Common myeloid progenitor, CD34-positive (primary cell): ENCODE measurements at regions of chr2 and their contacts with region 1.

Region 1: GRCh38 chr2:172285010-172285621 is 142.3 kb upstream of the ITGA6 start:
- DNase-seq: peak in 1 of 3 donors; percentile 14
- H3K4me3 ChIP-seq: no peak overlapping the region
- H3K27ac ChIP-seq: no peak overlapping the region
- H3K4me1 ChIP-seq: peaks cover 17 to 64% (median 60%) of the 10 kb centered on the region in 4 experiments
- H3K27me3 ChIP-seq: no peaks in the 10 kb centered on the region

Region 2: DNA sequence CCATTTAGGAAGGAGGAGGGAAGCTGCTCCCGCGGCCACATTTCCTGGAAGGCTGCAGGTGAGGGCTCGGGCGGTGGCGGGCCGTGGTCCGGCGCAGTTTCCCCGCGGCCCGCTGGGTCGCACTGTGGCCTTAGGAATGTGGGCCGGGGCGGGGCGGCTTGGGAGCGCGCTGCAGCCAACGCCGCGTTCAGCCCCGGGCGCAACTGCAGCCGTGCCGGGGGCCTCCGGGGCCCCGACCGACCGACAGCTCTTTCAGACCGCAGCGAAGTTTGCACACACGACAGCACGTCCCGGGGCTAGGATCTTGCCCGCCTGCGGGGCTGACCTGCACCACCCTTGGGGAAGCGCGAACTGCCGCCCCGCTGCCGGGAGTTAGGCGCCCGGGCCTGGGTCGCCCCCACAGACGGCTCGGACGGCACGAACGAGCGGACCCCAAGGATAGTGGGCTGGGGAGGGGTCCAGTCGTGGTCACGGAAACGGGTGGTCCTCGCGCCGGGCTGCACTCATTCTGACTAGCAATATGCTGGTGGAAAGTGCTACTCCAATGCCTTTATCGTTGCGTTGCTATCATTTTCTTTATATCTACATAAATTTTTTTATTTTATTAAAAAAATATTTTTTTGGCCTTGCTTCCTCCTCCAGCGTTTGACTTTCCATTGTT is 112.5 kb before region 1 on chr2:
- CTCF ChIA-PET with region 1: interaction called, 11 read pairs
- POLR2A ChIA-PET with region 1: no interaction called
- DNase-seq: peak; percentile 69 to 82 (median 76)
- H3K4me3 ChIP-seq: peak overlapping the region; percentile 53 to 86 (median 74)
- H3K27ac ChIP-seq: no peak overlapping the region
- H3K4me1 ChIP-seq: peaks cover 0 to 23% (median 9%) of the 10 kb centered on the region in 4 experiments
- H3K27me3 ChIP-seq: no peaks in the 10 kb centered on the region

Region 3: DNA sequence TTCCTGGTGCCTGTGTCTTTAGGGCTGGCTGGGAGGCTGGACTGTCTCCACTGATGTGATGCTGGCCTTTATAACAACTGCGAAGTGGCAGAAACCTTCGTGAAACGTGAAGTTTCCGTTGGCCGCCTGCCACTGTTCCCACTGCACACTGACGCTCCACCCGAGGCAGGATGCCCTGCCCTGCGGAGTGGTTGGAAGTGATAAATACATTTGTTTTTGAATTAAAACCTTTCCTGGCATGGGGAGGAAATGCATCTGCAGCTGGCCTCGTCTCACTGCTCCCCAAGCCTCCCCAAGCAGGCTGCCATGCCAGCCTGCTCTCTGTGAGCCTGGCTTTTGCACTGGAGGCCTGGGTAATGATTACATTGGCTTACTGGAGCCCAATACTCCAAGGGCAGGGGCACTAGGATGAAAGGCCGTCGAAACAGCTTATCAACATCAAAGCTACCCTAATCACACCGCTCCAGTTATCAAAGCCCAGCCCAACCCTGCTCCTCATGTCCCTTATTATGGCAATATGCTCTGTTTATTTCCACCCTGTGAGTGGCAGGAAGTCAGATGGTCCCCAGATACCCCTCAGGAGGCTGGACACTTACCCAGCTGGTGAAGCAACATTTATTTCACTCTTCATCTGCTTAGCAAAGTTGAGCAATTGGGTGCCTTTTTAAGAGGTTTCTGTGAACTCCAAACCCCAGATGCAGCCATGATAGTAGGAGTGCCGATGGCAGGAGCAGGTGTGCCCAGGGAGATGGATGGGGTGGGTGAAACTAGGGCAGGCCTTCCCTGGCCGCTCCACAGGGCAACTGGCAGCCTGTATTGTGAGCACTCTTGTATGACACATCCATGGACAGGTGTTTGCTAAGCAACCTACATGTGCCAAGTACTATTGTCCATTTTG is 44.9 kb after region 1 on chr2:
- CTCF ChIA-PET with region 1: no interaction called
- POLR2A ChIA-PET with region 1: no interaction called
- DNase-seq: peak in 2 of 3 donors; percentile 36 to 64
- H3K4me3 ChIP-seq: peak overlapping the region in 2 of 7 experiments; percentile 2 to 10
- H3K27ac ChIP-seq: no peak overlapping the region
- H3K4me1 ChIP-seq: peaks cover 0 to 25% (median 9%) of the 10 kb centered on the region in 4 experiments
- H3K27me3 ChIP-seq: no peaks in the 10 kb centered on the region

Region 4: GRCh38 chr2:172380436-172381274 is 95.5 kb after region 1 on chr2:
- CTCF ChIA-PET with region 1: no interaction called
- POLR2A ChIA-PET with region 1: no interaction called
- DNase-seq: peak; percentile 34 to 86 (median 82)
- H3K4me3 ChIP-seq: peak overlapping the region in 4 of 7 experiments; percentile 19 to 53 (median 28)
- H3K27ac ChIP-seq: no peak overlapping the region
- H3K4me1 ChIP-seq: peaks cover 3 to 25% (median 21%) of the 10 kb centered on the region in 4 experiments
- H3K27me3 ChIP-seq: no peaks in the 10 kb centered on the region